ENCODE measurements at regions of chr20 and their contacts with region 1.

Region 1: GRCh38 chr20:51767010-51767558 is 1.1 kb downstream of the ATP9A start:
- DNase-seq: peak; percentile 83
- ATAC-seq: peak; percentile 94
- H3K4me3 ChIP-seq: peak overlapping the region; percentile 90 to 99 (median 98)
- H3K27ac ChIP-seq: peak overlapping the region; percentile 68
- H3K4me1 ChIP-seq: peaks cover 31% of the 10 kb centered on the region
- H3K27me3 ChIP-seq: peaks cover 0 to 12% of the 10 kb centered on the region in 2 experiments; a peak in 2 of 5 replicates
- CTCF ChIP-seq: no peak
- EP300 ChIP-seq: peak in 1 of 2 experiments; percentile 47; a peak in 2 of 4 replicates
- POLR2A ChIP-seq: peak; percentile 30 to 77; a peak in 3 of 4 replicates
- RAD21 ChIP-seq: peak; percentile 40; the same call in 1 of the 2 replicates

Region 2: DNA sequence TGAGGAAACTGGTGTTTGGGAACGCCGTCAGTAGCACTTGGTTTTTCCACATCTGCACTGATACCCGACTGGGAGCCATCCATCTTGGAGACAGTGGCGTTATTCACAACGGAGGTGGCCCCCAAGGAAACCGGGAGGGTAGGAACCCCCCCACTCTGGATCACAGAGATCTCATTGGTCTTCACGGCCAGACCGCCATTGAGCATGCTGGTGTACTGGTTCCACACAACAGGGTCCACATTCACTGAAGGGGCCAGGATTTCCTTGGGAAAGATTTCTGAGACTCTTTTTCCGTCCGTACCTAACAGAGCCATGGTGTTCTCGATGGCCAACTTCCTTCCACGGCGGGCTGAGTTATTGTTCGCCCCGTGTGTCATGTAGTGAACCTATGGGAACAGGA is 17.2 kb after region 1 on chr20:
- CTCF ChIA-PET with region 1: interaction called, 3 read pairs
- POLR2A ChIA-PET with region 1: interaction called, 16 read pairs
- in situ Hi-C with region 1: no loop called
- intact Hi-C with region 1: no loop called
- DNase-seq: no peak
- ATAC-seq: no peak
- H3K4me3 ChIP-seq: no peak overlapping the region
- H3K27ac ChIP-seq: no peak overlapping the region
- H3K4me1 ChIP-seq: peaks cover 30% of the 10 kb centered on the region
- H3K27me3 ChIP-seq: no peaks in the 10 kb centered on the region
- CTCF ChIP-seq: no peak
- EP300 ChIP-seq: no peak
- POLR2A ChIP-seq: no peak
- RAD21 ChIP-seq: no peak

Measured in HepG2 (cell line).